CD4-positive, alpha-beta memory T cell (primary cell): ENCODE measurements at regions of chr7 and their contacts with region 1.

Region 1: DNA sequence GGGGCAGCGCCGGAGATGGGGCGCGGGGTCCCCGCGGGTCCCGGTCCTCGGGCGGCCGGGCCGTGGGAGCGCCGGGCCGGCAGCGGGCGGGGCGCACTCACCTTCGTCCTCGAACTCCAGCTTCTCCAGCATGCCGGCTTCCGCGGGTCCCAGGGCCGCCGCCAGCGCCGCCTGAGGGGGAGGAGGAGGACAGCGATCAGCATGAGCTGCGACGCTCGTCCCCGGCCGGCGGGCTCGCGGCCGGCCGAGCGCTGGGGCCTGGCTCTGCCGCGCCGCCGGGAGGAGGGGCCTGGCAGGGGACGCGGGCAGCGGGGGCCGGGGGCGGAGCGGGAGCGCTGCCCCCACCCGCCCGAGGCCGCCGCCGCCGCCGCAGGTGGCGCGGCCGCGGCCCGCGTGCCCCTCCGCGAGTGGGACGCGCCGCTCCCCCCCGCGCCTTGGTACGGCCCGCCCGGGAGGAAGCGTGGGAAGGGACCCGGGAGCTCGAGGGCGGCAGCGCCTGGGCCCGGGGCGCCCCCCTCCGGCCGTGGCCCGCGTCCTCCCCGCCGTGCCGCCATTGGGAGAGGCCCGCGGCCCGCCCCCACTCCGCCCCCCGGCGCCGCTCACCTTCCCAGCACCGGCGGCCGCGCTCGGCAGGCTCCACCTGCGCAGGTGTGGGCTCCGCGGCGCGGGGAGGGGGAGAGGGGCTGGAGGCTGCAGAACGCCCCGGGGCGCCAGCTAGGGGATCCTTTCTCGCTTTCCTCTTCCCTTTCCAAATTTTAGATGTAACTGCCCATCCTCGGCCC is 112.5 kb upstream of the RHEB start:
- DNase-seq: peak; percentile 84 to 91 (median 88)
- H3K4me3 ChIP-seq: peak overlapping the region; percentile 73 to 83
- H3K4me3 Mint-ChIP-seq: peak overlapping the region; percentile 89 to 99 (median 96)
- H3K27ac ChIP-seq: peak overlapping the region; percentile 78
- H3K27ac Mint-ChIP-seq: peak overlapping the region; percentile 94 to 99 (median 97)
- H3K4me1 ChIP-seq: peaks cover 18% of the 10 kb centered on the region
- H3K4me1 Mint-ChIP-seq: peaks cover 18 to 38% (median 21%) of the 10 kb centered on the region in 4 donors
- H3K27me3 ChIP-seq: no peaks in the 10 kb centered on the region
- H3K27me3 Mint-ChIP-seq: no peaks in the 10 kb centered on the region

Region 2: DNA sequence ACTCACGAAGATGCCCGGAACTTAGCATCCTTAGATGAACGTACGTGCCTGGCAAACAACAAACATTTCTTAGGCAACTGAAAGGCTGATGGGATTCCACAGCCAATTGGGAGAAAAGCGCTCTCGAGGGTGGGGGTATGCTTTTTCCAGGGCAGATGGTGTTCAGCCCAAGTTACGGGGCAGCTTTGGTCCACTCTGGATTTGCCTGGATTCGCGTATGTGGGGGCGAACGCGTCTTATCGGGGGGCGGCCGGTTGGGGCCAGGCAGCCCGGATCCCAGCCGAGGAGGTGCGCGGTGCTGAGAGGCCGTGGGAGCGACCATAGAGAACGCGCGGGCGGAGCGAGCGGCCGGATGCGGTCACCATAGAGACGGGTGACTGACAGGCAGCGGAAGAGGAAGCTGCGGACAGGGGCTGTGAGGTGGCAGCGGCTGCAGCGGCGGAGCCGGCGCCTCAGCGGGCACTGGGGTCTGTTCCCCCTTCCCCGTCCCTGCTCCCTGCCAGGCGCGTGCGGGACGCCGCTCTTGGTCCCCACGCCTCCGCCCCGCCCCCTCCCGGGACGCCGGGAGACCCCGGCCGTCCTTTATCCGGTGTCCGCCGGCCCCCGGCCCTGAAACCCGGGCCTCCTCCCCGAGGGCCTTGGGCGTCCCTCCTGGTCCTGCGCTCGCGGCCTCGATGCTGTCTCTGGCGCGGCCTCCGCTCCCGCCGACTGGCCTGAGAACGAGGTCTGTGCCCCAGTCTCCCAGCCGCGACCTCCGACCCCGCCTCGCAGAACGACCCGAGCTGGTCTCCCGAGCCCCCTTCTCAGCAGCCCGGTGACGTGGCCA is 399.9 kb before region 1 on chr7 and contains the start of gene CHPF2:
- CTCF ChIA-PET with region 1: no interaction called
- POLR2A ChIA-PET with region 1: interaction called, 3 read pairs
- intact Hi-C with region 1: loop called (anchors 2 kb)
- DNase-seq: peak; percentile 83 to 90 (median 87)
- H3K4me3 ChIP-seq: peak within 1 kb of the TSS; percentile 75 to 94
- H3K4me3 Mint-ChIP-seq: peak within 1 kb of the TSS; percentile 98 to 100 (median 99)
- H3K27ac ChIP-seq: peak within 1 kb of the TSS; percentile 85
- H3K27ac Mint-ChIP-seq: peak within 1 kb of the TSS; percentile 95 to 99 (median 98)
- H3K4me1 ChIP-seq: peaks cover 38% of the 10 kb centered on the region
- H3K4me1 Mint-ChIP-seq: peaks cover 18 to 55% (median 33%) of the 10 kb centered on the region in 4 donors
- H3K27me3 ChIP-seq: no peaks in the 10 kb centered on the region
- H3K27me3 Mint-ChIP-seq: no peaks in the 10 kb centered on the region
- total RNA-seq, gene CHPF2: 52.2 to 52.3 TPM

Region 3: GRCh38 chr7:151341357-151342101 is 290.6 kb before region 1 on chr7 and contains the start of gene NUB1:
- CTCF ChIA-PET with region 1: no interaction called
- POLR2A ChIA-PET with region 1: interaction called, 3 read pairs
- intact Hi-C with region 1: loop called (anchors 1 kb)
- DNase-seq: peak; percentile 84 to 94 (median 88)
- H3K4me3 ChIP-seq: peak within 1 kb of the TSS; percentile 80 to 86
- H3K4me3 Mint-ChIP-seq: peak within 1 kb of the TSS; percentile 79 to 91 (median 89)
- H3K27ac ChIP-seq: peak within 1 kb of the TSS; percentile 81
- H3K27ac Mint-ChIP-seq: peak within 1 kb of the TSS; percentile 87 to 97 (median 93)
- H3K4me1 ChIP-seq: peaks cover 28% of the 10 kb centered on the region
- H3K4me1 Mint-ChIP-seq: peaks cover 19 to 42% (median 29%) of the 10 kb centered on the region in 4 donors
- H3K27me3 ChIP-seq: no peaks in the 10 kb centered on the region
- H3K27me3 Mint-ChIP-seq: no peaks in the 10 kb centered on the region
- total RNA-seq, gene NUB1: 116 to 119 TPM

Region 4: GRCh38 chr7:151550656-151551286 is 81.4 kb before region 1 on chr7:
- CTCF ChIA-PET with region 1: no interaction called
- POLR2A ChIA-PET with region 1: no interaction called
- intact Hi-C with region 1: no loop called
- DNase-seq: peak in 1 of 5 donors; percentile 11
- H3K4me3 ChIP-seq: no peak overlapping the region
- H3K4me3 Mint-ChIP-seq: peak overlapping the region in 1 of 8 donors; percentile 31
- H3K27ac ChIP-seq: no peak overlapping the region
- H3K27ac Mint-ChIP-seq: peak overlapping the region in 1 of 7 donors; percentile 35
- H3K4me1 ChIP-seq: no peaks in the 10 kb centered on the region
- H3K4me1 Mint-ChIP-seq: peaks cover 5 to 18% (median 9%) of the 10 kb centered on the region in 4 donors
- H3K27me3 ChIP-seq: no peaks in the 10 kb centered on the region
- H3K27me3 Mint-ChIP-seq: peaks cover 3 to 13% of the 10 kb centered on the region in 2 donors

Region 5: GRCh38 chr7:151570366-151570915 is 61.7 kb before region 1 on chr7:
- CTCF ChIA-PET with region 1: no interaction called
- POLR2A ChIA-PET with region 1: interaction called, 3 read pairs
- intact Hi-C with region 1: loop called (anchors 1 kb)
- DNase-seq: no peak
- H3K4me3 ChIP-seq: no peak overlapping the region
- H3K4me3 Mint-ChIP-seq: no peak overlapping the region
- H3K27ac ChIP-seq: no peak overlapping the region
- H3K27ac Mint-ChIP-seq: no peak overlapping the region
- H3K4me1 ChIP-seq: no peaks in the 10 kb centered on the region
- H3K4me1 Mint-ChIP-seq: no peaks in the 10 kb centered on the region
- H3K27me3 ChIP-seq: no peaks in the 10 kb centered on the region
- H3K27me3 Mint-ChIP-seq: no peaks in the 10 kb centered on the region